ENCODE measurements at regions of chr20 and their contacts with region 1.

Region 1: GRCh38 chr20:44217342-44218092 is 6.9 kb upstream of the OSER1 start:
- DNase-seq: peak; percentile 80
- ATAC-seq: peak; percentile 57
- H3K4me3 Mint-ChIP-seq: peak overlapping the region; percentile 62
- H3K27ac Mint-ChIP-seq: peak overlapping the region; percentile 86
- H3K4me1 Mint-ChIP-seq: peaks cover 54% of the 10 kb centered on the region
- H3K27me3 Mint-ChIP-seq: no peaks in the 10 kb centered on the region

Region 2: GRCh38 chr20:44166477-44166876 is 51.0 kb before region 1 on chr20:
- CTCF ChIA-PET with region 1: no interaction called
- POLR2A ChIA-PET with region 1: no interaction called
- DNase-seq: no peak
- ATAC-seq: no peak
- H3K4me3 Mint-ChIP-seq: no peak overlapping the region
- H3K27ac Mint-ChIP-seq: no peak overlapping the region
- H3K4me1 Mint-ChIP-seq: no peaks in the 10 kb centered on the region
- H3K27me3 Mint-ChIP-seq: peaks cover 45% of the 10 kb centered on the region

Region 3: GRCh38 chr20:44196271-44196670 is 21.2 kb before region 1 on chr20:
- CTCF ChIA-PET with region 1: interaction called, 10 read pairs
- POLR2A ChIA-PET with region 1: no interaction called
- DNase-seq: no peak
- ATAC-seq: no peak
- H3K4me3 Mint-ChIP-seq: no peak overlapping the region
- H3K27ac Mint-ChIP-seq: no peak overlapping the region
- H3K4me1 Mint-ChIP-seq: peaks cover 44% of the 10 kb centered on the region
- H3K27me3 Mint-ChIP-seq: peaks cover 12% of the 10 kb centered on the region

Region 4: GRCh38 chr20:44271915-44272663 is 54.6 kb after region 1 on chr20:
- CTCF ChIA-PET with region 1: interaction called, 44 read pairs
- POLR2A ChIA-PET with region 1: no interaction called
- DNase-seq: no peak
- ATAC-seq: no peak
- H3K4me3 Mint-ChIP-seq: no peak overlapping the region
- H3K27ac Mint-ChIP-seq: no peak overlapping the region
- H3K4me1 Mint-ChIP-seq: no peaks in the 10 kb centered on the region
- H3K27me3 Mint-ChIP-seq: no peaks in the 10 kb centered on the region

Region 5: DNA sequence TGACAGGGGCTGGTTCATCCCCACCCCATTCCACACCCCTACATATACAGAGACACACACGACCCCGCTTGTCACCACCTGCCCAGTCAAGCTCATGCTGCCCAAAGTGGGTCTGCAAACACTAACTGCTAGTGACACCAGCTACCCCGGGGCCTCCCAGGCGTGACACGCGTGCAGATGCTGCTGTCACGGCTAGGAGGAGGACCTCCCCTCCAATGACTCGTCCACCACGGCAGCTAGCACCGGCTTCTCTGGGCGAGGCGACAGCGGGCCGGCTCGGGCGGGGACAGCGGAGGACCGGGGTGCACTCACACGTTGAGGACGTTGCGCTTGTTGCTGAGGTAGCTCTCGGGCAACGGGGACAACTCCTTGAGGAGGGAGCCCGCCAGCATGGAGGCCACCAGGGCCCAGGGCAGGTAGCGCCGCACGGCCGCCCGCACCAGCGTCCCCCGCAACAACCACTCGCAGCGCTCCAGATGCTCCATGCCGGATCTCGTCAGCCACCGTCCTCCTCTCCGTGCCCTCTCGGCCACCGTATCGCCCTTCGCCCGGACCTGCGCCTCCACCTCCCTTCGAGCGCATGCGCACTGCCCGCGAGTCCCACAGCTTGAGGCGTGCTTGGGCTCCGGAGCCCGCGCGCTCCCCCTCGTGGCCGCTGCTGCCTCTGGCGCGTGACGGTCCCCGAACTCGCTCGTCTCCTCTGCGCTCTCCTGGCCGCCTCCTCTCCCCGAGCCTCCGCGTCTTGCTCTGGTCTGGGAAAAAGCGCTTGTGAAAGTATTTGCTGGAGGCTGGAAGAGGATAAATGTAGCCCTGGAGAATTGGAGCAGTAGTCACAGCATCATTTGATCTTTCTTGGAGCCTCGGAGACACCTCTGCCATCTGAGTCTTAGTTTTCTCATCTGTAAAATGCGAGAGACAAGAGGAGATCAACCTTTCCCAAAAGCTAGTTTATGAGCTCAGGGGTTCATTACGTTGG is 93.4 kb after region 1 on chr20 and contains the start of gene FITM2:
- CTCF ChIA-PET with region 1: interaction called, 529 read pairs
- POLR2A ChIA-PET with region 1: interaction called, 17 read pairs
- DNase-seq: peak; percentile 99
- ATAC-seq: peak; percentile 92
- H3K4me3 Mint-ChIP-seq: peak within 1 kb of the TSS; percentile 88
- H3K27ac Mint-ChIP-seq: peak within 1 kb of the TSS; percentile 90
- H3K4me1 Mint-ChIP-seq: peaks cover 19% of the 10 kb centered on the region
- H3K27me3 Mint-ChIP-seq: peaks cover 6% of the 10 kb centered on the region
- total RNA-seq, gene FITM2: 2.7 to 2.9 TPM

Region 6: GRCh38 chr20:44388466-44389023 is 171.0 kb after region 1 on chr20:
- CTCF ChIA-PET with region 1: interaction called, 114 read pairs
- POLR2A ChIA-PET with region 1: no interaction called
- DNase-seq: peak; percentile 78
- ATAC-seq: peak; percentile 86
- H3K4me3 Mint-ChIP-seq: no peak overlapping the region
- H3K27ac Mint-ChIP-seq: no peak overlapping the region
- H3K4me1 Mint-ChIP-seq: peaks cover 6% of the 10 kb centered on the region
- H3K27me3 Mint-ChIP-seq: peaks cover 2% of the 10 kb centered on the region

Region 7: DNA sequence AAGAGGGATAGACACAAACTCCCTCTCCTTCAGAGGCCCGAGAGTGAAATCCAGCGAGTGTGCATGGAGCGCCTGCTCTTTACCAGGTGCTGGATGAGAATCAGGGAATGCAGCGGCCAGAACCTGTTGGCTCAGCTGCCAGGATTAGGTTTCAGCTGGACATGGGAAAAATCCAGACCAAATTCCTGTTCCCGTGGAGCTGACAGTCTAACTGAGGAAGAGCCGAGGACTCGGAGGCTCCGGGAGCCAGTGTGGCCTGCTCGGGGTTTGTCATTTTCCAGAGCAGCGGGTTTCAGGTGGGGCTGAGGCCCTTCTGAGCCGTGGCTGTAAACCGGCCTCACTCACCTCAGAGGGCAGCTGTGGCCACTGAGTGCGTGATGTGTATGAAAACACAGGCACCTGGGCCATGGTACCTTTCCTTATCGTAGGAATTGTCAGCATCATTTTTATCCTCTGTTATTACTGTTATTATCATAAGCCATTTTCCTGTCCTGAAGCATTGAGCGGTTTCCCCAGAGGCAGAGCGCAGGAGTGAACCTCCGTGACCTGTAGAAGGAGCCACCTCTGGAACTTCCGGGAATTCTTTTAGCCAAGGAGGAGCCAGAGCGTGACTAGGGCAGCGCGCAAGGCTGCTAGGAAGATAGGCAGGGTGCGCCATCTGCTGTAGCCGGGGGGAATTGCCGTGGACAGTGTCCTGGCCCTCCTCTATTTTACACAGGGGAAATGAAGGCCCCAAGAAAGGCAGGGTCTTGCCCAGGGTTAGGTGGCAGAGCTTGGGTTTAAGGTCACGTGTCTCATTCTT is 392.2 kb after region 1 on chr20:
- CTCF ChIA-PET with region 1: interaction called, 38 read pairs
- POLR2A ChIA-PET with region 1: no interaction called
- DNase-seq: peak; percentile 87
- ATAC-seq: peak; percentile 93
- H3K4me3 Mint-ChIP-seq: peak overlapping the region; percentile 22
- H3K27ac Mint-ChIP-seq: peak overlapping the region; percentile 92
- H3K4me1 Mint-ChIP-seq: peaks cover 21% of the 10 kb centered on the region
- H3K27me3 Mint-ChIP-seq: no peaks in the 10 kb centered on the region